Right cardiac atrium (tissue), 5 donors: ENCODE measurements at regions of chr18 and their contacts with region 1.

Region 1: DNA sequence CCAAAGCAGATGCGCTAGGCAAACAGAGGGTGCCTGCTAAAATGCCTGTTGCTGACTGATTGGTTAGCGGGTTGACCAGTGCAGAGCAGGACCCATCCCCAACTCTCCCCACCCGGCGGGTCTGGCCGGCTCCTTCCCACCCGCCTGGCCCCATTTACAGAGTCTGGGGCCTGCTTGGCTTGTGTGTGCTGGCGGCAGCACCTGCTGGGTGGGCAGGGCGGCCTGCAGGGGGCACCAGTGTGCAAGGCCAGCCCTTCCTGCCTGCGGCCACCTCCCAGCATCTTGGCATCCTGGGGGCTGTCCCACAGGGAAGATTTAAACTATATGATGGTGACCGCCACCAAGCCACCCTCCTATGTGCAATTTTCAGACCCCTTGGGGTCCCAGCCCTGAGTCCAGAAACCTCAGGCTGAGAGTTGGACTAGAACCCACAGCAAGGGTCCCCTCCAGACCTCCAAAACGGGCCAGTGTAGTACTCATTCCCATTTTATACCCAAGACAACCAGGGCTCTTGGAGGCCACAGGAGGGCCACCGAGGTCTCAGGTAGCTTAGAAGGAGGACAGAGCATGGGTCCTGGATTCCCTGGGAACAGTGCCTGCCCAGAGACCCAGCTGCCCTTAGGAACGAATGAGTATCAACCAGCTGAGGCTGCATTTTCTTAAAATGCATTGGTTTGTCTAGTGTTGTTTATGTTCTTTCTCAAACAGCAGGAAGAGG is 173.6 kb downstream of the SMAD7 start:
- DNase-seq: peak; percentile 68 to 90 (median 89)
- ATAC-seq: peak in 1 of 2 donors; percentile 4
- H3K4me3 ChIP-seq: no peak overlapping the region
- H3K27ac ChIP-seq: peak overlapping the region; percentile 76
- H3K4me1 ChIP-seq: peaks cover 41% of the 10 kb centered on the region
- H3K27me3 ChIP-seq: no peaks in the 10 kb centered on the region

Region 2: DNA sequence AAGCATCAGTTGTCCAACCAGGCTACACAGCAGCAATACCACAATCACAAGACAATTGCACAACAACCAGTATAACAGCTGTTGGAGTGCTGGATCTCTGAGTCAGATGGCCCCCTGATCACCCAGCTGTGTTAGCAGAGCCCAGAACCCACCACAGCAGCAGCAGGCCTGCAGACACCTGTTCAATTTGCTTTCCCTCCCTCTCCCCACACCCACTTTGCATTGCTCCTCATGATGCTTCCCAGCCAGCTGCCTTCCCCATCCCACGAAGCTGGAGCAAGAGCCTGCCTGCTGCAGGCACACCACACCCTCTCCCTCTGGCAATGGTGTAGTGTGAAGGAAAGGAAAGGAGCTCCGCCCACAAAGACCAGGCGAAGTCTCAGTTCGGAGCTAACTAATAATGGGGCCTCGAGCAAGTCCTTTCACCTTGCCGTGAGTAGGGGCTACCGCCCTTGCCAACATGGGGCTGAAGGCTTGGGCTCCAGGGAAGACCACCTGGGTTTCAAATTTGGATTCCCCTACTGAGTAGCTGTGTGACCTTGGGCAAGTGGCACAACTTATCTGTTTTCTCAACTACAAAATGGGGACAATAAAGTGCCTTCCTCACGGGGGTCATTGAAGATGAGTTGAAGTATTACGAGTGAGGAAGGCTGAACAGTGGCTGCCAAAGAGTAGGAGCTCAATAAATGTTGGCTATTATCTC is 348.6 kb before region 1 on chr18:
- intact Hi-C with region 1: no loop called
- DNase-seq: no peak
- ATAC-seq: peak in 1 of 2 donors; percentile 71
- H3K4me3 ChIP-seq: no peak overlapping the region
- H3K27ac ChIP-seq: no peak overlapping the region
- H3K4me1 ChIP-seq: no peaks in the 10 kb centered on the region
- H3K27me3 ChIP-seq: peaks cover 2% of the 10 kb centered on the region

Region 3: GRCh38 chr18:48680339-48681221 is 96.6 kb before region 1 on chr18:
- intact Hi-C with region 1: loop called in 2 of 4 experiments (anchors 5 to 10 kb)
- DNase-seq: peak; percentile 95 to 98 (median 97)
- ATAC-seq: peak; percentile 95
- H3K4me3 ChIP-seq: no peak overlapping the region
- H3K27ac ChIP-seq: peak overlapping the region; percentile 93
- H3K4me1 ChIP-seq: peaks cover 24% of the 10 kb centered on the region
- H3K27me3 ChIP-seq: no peaks in the 10 kb centered on the region

Region 4: DNA sequence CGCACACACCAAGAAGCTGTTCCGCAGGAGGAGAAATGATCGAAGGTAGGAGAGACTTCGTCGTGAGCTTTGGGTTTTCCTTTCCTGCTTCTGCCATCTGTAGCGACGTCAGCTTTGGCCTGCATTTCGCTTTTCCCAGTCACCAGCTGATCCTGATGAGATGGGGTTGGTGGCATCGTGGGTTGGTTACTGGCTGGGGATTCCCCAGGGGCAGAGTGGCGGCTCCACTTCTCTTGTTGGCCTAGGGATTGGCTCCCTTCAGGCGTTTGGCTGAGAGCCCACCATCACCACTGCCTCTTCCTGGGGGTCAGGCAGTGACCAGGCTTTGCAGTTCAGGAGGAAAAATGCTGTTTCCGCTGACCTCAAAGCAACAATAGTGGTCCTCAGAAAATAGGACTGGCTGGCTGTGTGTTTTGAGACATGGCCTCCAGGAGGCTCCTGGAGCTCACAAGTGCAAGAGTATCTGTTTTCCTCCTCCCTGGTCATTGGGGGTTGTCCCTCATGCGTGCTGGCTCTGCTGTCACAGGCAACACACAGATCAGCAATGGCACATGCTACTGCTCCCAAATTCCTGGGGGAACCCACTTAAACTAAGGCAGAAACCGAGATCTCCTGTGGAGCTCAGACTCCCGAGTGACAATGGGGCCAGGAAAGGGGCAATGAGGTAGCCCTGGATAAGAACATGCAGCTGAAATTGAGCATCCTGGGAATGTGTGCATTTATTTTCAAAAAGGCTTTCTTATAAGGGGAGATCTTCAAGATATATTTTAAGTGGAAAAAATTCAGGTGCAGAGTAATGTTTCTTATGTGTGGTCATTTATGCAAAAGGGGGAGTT is 65.3 kb before region 1 on chr18:
- intact Hi-C with region 1: loop called in 2 of 4 experiments (anchors 10 kb)
- DNase-seq: peak; percentile 67 to 83 (median 78)
- ATAC-seq: peak; percentile 69 to 72
- H3K4me3 ChIP-seq: no peak overlapping the region
- H3K27ac ChIP-seq: peak overlapping the region; percentile 39
- H3K4me1 ChIP-seq: peaks cover 32% of the 10 kb centered on the region
- H3K27me3 ChIP-seq: no peaks in the 10 kb centered on the region

Region 5: DNA sequence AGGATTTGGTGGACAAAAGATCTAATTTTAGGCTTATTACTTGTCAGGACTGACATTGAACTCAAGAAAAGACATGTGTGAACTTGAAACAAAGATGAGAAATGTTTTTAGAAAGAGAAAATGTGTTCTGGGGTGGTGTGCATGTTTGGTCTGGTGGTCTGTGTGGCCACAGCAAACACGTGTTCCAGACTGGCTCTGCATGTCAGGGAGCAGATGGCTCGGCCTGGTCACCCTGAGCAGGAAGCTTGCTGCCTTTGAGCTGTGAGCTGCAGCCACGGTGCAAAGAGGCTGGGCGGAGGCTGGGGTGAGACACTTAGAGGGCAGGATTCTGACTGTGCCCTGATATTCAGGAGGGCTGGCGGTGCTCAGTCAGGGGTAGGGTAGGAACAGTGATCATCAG is 52.2 kb before region 1 on chr18:
- intact Hi-C with region 1: no loop called
- DNase-seq: peak in 1 of 3 donors; percentile 33
- ATAC-seq: no peak
- H3K4me3 ChIP-seq: no peak overlapping the region
- H3K27ac ChIP-seq: no peak overlapping the region
- H3K4me1 ChIP-seq: peaks cover 10% of the 10 kb centered on the region
- H3K27me3 ChIP-seq: no peaks in the 10 kb centered on the region

Region 6: DNA sequence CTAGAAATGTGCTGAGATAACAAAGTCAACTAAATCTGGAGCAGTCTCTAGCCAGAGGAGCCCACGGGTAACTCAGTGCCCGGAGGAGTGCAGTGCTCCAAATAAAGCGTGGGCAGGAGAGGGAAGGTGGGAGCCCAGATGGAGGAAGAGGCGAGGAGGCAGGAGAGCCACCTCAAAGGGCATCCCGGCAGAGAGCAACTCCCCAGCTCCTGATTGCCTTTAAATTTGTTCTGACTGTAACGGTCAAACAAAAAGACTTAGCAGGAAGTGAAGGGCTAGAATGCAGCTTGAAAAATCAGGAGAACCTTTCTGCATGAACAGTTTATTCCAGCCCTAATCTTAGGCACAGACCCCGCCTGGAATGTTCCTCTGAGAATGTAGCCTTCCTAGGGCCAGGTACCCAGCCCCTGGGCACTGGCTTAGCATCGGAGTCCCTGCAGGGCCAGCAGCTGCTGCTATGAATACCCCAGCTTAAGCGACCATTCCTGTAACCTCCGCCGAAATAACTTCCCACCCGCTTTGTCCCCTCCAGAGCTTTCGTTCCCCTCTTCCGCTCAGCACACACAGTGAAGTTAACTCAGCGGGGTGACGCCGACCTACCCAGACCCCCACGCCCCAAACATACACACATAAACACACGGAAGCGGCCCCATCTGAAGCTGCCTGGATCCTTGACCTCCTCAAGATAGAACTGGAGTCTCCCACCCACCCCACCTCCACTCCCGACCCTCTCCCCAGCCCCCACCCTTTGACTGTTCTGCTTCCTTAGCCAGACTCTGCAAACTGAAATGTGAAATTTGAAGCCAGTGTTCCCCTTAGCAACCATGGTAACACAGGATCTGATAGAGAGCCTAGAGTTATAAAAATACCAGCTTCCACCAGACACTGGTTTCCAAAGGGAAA is 50.4 kb after region 1 on chr18:
- intact Hi-C with region 1: loop called in 2 of 4 experiments (anchors 5 to 10 kb)
- DNase-seq: peak in 2 of 3 donors; percentile 8 to 56
- ATAC-seq: peak; percentile 67 to 69
- H3K4me3 ChIP-seq: peak overlapping the region; percentile 9
- H3K27ac ChIP-seq: peak overlapping the region; percentile 80
- H3K4me1 ChIP-seq: peaks cover 40% of the 10 kb centered on the region
- H3K27me3 ChIP-seq: no peaks in the 10 kb centered on the region

Region 7: GRCh38 chr18:48842259-48843061 is 65.3 kb after region 1 on chr18:
- intact Hi-C with region 1: loop called in 1 of 4 experiments (anchors 10 kb)
- DNase-seq: peak; percentile 69 to 81 (median 78)
- ATAC-seq: peak; percentile 69 to 85
- H3K4me3 ChIP-seq: no peak overlapping the region
- H3K27ac ChIP-seq: peak overlapping the region; percentile 93
- H3K4me1 ChIP-seq: peaks cover 21% of the 10 kb centered on the region
- H3K27me3 ChIP-seq: no peaks in the 10 kb centered on the region

Region 8: GRCh38 chr18:49178736-49179135 is 401.6 kb after region 1 on chr18:
- intact Hi-C with region 1: loop called in 1 of 4 experiments (anchors 10 kb)
- DNase-seq: peak in 1 of 3 donors; percentile 18
- ATAC-seq: peak in 1 of 2 donors; percentile 62
- H3K4me3 ChIP-seq: no peak overlapping the region
- H3K27ac ChIP-seq: no peak overlapping the region
- H3K4me1 ChIP-seq: no peaks in the 10 kb centered on the region
- H3K27me3 ChIP-seq: no peaks in the 10 kb centered on the region